GM12878 (cell line): ENCODE measurements at regions of chr3 and their contacts with region 1.

Region 1: DNA sequence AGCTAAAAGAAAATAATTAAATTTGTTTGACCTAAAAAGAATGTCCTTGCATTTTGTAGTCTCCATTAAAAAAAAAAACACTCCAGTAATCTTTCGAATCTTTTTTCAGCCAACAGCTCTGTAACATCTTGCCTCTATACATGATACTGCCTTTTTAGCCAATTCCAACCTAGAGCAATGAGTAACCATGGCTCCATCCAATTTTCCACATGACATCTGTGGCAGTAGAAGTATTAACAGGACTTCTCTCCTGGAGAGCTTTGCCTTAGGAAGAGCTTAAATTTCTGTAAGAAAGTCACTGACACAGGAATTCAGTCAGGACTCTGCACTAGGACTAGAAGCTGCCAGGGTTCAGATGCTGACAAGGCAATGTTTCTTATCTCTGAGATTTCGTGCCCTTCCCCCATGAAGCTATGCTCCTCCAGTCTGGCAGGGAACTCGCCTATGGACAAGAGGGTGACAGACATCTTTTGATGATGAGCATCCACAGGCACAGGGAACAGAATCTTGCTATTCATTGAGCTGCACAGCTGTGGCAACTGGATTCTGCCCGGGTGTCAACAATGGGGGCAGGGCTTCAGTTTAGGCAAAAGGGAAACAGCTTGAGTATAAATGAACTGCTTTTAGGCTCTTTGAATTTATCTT is 81.8 kb downstream of the ALCAM start:
- DNase-seq: no peak
- ATAC-seq: no peak
- H3K4me3 ChIP-seq: no peak overlapping the region
- H3K27ac ChIP-seq: no peak overlapping the region
- H3K4me1 ChIP-seq: no peaks in the 10 kb centered on the region
- H3K27me3 ChIP-seq: no peaks in the 10 kb centered on the region
- CTCF ChIP-seq: no peak
- EP300 ChIP-seq: no peak
- POLR2A ChIP-seq: no peak
- RAD21 ChIP-seq: no peak

Region 2: DNA sequence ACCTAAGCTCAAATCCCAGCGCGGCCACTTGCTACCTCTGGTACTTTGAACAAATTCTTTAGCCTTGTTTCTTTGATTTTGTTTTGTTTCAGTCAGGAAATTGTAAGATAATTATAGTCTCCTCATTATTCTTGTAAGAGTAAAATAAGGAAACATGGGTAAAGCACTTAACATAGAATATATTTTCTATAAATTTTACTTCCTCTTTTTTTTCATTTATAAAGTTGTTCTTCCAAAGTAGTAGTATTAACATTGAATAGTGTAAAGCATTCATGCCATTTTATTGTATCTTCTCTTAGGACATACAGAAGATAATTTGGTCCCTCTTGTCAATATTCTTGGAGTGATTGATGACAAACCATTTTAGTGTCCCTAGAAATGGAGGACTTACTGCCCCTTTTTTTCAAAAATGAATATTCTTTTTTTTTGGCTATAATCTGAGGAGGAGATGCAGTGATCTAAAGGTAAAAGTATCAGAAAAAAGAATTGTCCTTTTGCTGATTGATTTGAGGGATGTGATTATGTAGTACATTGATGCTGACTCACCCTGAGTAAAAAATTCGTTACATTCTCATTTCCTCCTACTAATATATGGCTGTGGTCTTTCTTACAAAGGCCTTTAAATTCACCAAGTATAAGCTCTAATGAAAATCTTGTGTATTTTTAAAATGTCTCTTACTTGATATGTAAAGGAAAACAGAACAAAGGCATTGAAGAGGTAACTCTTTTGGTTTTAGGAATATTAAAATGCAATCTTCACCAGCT is 30.8 kb before region 1 on chr3:
- CTCF ChIA-PET with region 1: no interaction called
- POLR2A ChIA-PET with region 1: no interaction called
- RAD21 ChIA-PET with region 1: no interaction called
- SMC1A ChIA-PET with region 1: no interaction called
- in situ Hi-C with region 1: no loop called
- intact Hi-C with region 1: no loop called
- DNase-seq: no peak
- ATAC-seq: peak; percentile 86
- H3K4me3 ChIP-seq: no peak overlapping the region
- H3K27ac ChIP-seq: no peak overlapping the region
- H3K4me1 ChIP-seq: no peaks in the 10 kb centered on the region
- H3K27me3 ChIP-seq: no peaks in the 10 kb centered on the region
- CTCF ChIP-seq: no peak
- EP300 ChIP-seq: no peak
- POLR2A ChIP-seq: no peak
- RAD21 ChIP-seq: no peak

Region 3: DNA sequence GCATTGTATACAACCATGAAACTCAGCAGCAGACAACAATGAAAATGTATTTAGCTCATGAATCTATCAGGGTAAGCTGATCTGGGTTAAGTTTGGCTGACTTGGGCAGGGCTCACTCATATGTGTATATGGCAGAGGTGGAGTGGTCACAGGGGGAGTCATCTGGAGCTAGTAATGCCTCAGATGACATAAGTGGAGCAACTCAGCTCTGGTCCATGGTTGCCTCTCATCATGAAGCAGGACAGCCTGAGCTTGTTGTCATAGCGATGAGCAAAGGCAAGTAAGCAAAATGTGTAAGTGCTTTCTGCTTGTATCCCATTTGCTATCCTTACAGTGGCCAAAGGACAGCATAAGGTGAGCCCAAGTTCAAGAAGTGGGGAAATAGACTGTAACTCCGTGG is 17.3 kb before region 1 on chr3:
- CTCF ChIA-PET with region 1: no interaction called
- POLR2A ChIA-PET with region 1: no interaction called
- RAD21 ChIA-PET with region 1: no interaction called
- SMC1A ChIA-PET with region 1: interaction called, 14 read pairs
- in situ Hi-C with region 1: no loop called
- intact Hi-C with region 1: no loop called
- DNase-seq: no peak
- ATAC-seq: peak; percentile 44
- H3K4me3 ChIP-seq: no peak overlapping the region
- H3K27ac ChIP-seq: no peak overlapping the region
- H3K4me1 ChIP-seq: no peaks in the 10 kb centered on the region
- H3K27me3 ChIP-seq: no peaks in the 10 kb centered on the region
- CTCF ChIP-seq: no peak
- EP300 ChIP-seq: no peak
- POLR2A ChIP-seq: no peak
- RAD21 ChIP-seq: no peak

Region 4: GRCh38 chr3:105458518-105459215 is 10.2 kb after region 1 on chr3:
- CTCF ChIA-PET with region 1: interaction called, 3 read pairs
- POLR2A ChIA-PET with region 1: interaction called, 4 read pairs
- RAD21 ChIA-PET with region 1: no interaction called
- SMC1A ChIA-PET with region 1: interaction called, 11 read pairs
- in situ Hi-C with region 1: no loop called
- intact Hi-C with region 1: no loop called
- DNase-seq: no peak
- ATAC-seq: no peak
- H3K4me3 ChIP-seq: no peak overlapping the region
- H3K27ac ChIP-seq: no peak overlapping the region
- H3K4me1 ChIP-seq: no peaks in the 10 kb centered on the region
- H3K27me3 ChIP-seq: no peaks in the 10 kb centered on the region
- CTCF ChIP-seq: no peak
- EP300 ChIP-seq: no peak
- POLR2A ChIP-seq: no peak
- RAD21 ChIP-seq: no peak

Region 5: GRCh38 chr3:105722943-105723556 is 274.6 kb after region 1 on chr3:
- CTCF ChIA-PET with region 1: no interaction called
- POLR2A ChIA-PET with region 1: no interaction called
- RAD21 ChIA-PET with region 1: no interaction called
- SMC1A ChIA-PET with region 1: no interaction called
- in situ Hi-C with region 1: no loop called
- intact Hi-C with region 1: no loop called
- DNase-seq: peak; percentile 36
- ATAC-seq: peak; percentile 98
- H3K4me3 ChIP-seq: no peak overlapping the region
- H3K27ac ChIP-seq: no peak overlapping the region
- H3K4me1 ChIP-seq: peaks cover 7% of the 10 kb centered on the region; the same call in 1 of the 2 replicates
- H3K27me3 ChIP-seq: no peaks in the 10 kb centered on the region
- CTCF ChIP-seq: no peak
- EP300 ChIP-seq: peak; percentile 92 to 98
- POLR2A ChIP-seq: no peak
- RAD21 ChIP-seq: no peak